ENCODE measurements at regions of chr5 and their contacts with region 1.

Region 1: DNA sequence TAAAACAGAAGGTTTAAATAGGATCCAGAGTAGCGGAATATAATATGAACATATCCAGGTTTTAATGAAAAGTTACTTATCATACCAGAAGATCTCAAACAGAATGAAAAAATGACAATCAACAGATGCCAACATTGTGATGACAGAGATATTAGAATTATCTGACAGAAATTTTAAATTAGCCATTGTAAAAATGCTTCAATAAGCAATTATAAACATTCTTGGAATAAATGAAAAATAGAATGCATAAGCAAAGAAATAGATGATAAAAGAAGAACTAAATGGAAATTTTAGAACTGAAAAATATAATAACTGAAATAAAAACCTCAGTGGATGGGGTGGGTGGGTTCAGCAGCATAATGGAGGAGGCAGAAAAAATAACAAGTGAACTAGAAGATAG is 37.2 kb downstream of the ZMAT2 start:
- DNase-seq: no peak
- H3K4me3 ChIP-seq: no peak overlapping the region
- H3K27ac ChIP-seq: no peak overlapping the region
- H3K4me1 ChIP-seq: no peaks in the 10 kb centered on the region
- H3K27me3 ChIP-seq: peaks cover 0 to 3% of the 10 kb centered on the region in 2 donors
- CTCF ChIP-seq: no peak
- POLR2A ChIP-seq: no peak

Region 2: GRCh38 chr5:140284013-140284412 is 453.5 kb before region 1 on chr5:
- intact Hi-C with region 1: loop called (anchors 5 kb)
- DNase-seq: no peak
- H3K4me3 ChIP-seq: no peak overlapping the region
- H3K27ac ChIP-seq: no peak overlapping the region
- H3K4me1 ChIP-seq: no peaks in the 10 kb centered on the region
- H3K27me3 ChIP-seq: no peaks in the 10 kb centered on the region
- CTCF ChIP-seq: no peak
- POLR2A ChIP-seq: no peak

Region 3: GRCh38 chr5:141245250-141245717 is 507.8 kb after region 1 on chr5 and contains the start of gene PCDHB15:
- intact Hi-C with region 1: no loop called
- DNase-seq: no peak
- H3K4me3 ChIP-seq: peak within 1 kb of the TSS in 2 of 3 donors; percentile 10 to 14
- H3K27ac ChIP-seq: no peak within 1 kb of the TSS
- H3K4me1 ChIP-seq: no peaks in the 10 kb centered on the region
- H3K27me3 ChIP-seq: no peaks in the 10 kb centered on the region
- CTCF ChIP-seq: no peak
- POLR2A ChIP-seq: no peak
- total RNA-seq, gene PCDHB15: 1.6 to 4.2 (median 3.3) TPM

Measured in breast epithelium (tissue), 4 donors.